ENCODE measurements at regions of chr12 and their contacts with region 1.

Region 1: GRCh38 chr12:31922341-31923062 is 36.7 kb upstream of the RESF1 start:
- DNase-seq: no peak
- H3K4me3 ChIP-seq: no peak overlapping the region
- H3K27ac ChIP-seq: no peak overlapping the region
- H3K4me1 ChIP-seq: no peaks in the 10 kb centered on the region
- H3K27me3 ChIP-seq: no peaks in the 10 kb centered on the region
- CTCF ChIP-seq: no peak

Region 2: GRCh38 chr12:31855427-31855826 is 67.1 kb before region 1 on chr12:
- CTCF ChIA-PET with region 1: interaction called, 13 read pairs
- POLR2A ChIA-PET with region 1: no interaction called
- intact Hi-C with region 1: no loop called
- DNase-seq: no peak
- H3K4me3 ChIP-seq: no peak overlapping the region
- H3K27ac ChIP-seq: no peak overlapping the region
- H3K4me1 ChIP-seq: peaks cover 5% of the 10 kb centered on the region; the same call in 1 of the 2 replicates
- H3K27me3 ChIP-seq: no peaks in the 10 kb centered on the region
- CTCF ChIP-seq: no peak